ENCODE measurements at regions of chr1 and their contacts with region 1.

Region 1: GRCh38 chr1:244074559-244075171 is 23.6 kb downstream of the ZBTB18 start:
- DNase-seq: peak; percentile 64 to 88 (median 76)
- ATAC-seq: peak; percentile 94 to 98 (median 98)
- H3K4me3 ChIP-seq: peak overlapping the region; percentile 35 to 40
- H3K4me3 Mint-ChIP-seq: peak overlapping the region; percentile 72 to 83 (median 77)
- H3K27ac ChIP-seq: peak overlapping the region; percentile 71
- H3K27ac Mint-ChIP-seq: peak overlapping the region; percentile 95 to 99
- H3K4me1 ChIP-seq: peaks cover 22 to 43% of the 10 kb centered on the region in 2 experiments
- H3K4me1 Mint-ChIP-seq: peaks cover 45 to 55% (median 47%) of the 10 kb centered on the region in 3 donors
- H3K27me3 ChIP-seq: peaks cover 0 to 8% of the 10 kb centered on the region in 2 experiments
- H3K27me3 Mint-ChIP-seq: no peaks in the 10 kb centered on the region

Region 2: DNA sequence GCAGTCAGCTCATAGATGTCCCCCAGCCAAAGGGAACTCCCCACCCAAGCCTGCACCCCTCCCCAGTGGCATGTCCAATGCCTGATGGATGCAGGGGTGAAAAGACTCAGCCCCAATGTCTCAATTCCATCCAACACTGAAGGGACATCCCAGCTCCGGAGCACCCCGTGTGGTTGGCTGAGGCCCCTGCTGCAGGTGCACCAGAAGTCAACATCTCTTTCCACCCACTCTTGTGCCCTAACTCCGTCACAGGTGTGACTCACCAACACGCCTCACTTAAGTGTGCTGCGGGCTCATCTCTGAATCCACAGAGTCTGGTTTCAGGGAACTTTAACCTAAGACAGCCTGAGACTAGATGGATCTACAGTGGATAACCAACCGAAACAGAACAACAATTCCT is 64.5 kb before region 1 on chr1:
- CTCF ChIA-PET with region 1: no interaction called
- POLR2A ChIA-PET with region 1: no interaction called
- DNase-seq: peak in 12 of 35 experiments; percentile 1 to 23 (median 2)
- ATAC-seq: peak in 3 of 4 experiments; percentile 27 to 59 (median 35)
- H3K4me3 ChIP-seq: no peak overlapping the region
- H3K4me3 Mint-ChIP-seq: no peak overlapping the region
- H3K27ac ChIP-seq: no peak overlapping the region
- H3K27ac Mint-ChIP-seq: no peak overlapping the region
- H3K4me1 ChIP-seq: no peaks in the 10 kb centered on the region
- H3K4me1 Mint-ChIP-seq: no peaks in the 10 kb centered on the region
- H3K27me3 ChIP-seq: peaks cover 0 to 9% of the 10 kb centered on the region in 2 experiments
- H3K27me3 Mint-ChIP-seq: no peaks in the 10 kb centered on the region

Region 3: DNA sequence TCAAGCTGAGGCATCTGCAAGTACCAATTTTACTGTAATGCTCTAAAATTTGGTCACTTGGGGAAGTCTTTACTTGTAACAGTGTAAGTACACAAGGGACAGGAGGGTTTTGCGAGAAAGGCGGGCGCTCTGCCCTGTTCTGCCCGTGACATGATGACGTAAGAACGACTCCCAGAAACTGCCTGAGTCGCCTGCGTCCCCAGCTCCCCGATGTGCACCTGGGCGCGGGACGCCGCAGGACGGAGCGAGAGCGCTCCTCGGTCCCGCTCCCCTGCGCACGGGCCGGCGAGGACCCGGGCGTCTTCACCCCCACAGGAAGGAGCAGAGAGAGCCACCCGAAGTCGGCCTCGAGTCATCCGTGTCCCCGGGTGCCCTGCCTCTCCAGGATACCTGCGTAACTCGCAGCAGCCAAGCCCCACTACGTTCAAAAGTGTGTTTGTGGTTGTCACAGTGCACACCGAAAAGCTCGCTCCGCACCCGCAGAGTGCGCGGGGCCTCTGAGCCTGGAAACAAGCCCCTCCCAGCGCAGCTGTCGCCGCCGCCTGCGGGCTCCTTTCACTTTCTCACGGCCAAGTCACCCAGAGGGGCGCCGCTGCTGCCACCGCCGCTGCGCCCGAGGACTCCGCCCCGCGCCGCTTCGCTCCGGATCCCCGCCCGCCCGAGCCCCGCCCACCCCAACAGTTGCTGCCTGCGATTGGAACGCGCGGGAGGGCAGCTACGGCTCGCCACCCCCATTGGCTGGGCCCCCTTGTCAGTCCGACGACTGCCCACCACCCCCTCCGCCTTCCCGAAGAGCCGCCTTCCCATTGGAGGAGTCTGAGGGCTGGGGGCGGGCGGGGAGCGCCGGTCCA is 26.8 kb before region 1 on chr1:
- CTCF ChIA-PET with region 1: interaction called, 5 to 22 read pairs
- POLR2A ChIA-PET with region 1: interaction called, 5 to 36 read pairs
- DNase-seq: peak; percentile 90 to 99 (median 97)
- ATAC-seq: peak; percentile 78 to 85 (median 83)
- H3K4me3 ChIP-seq: peak overlapping the region; percentile 71 to 95
- H3K4me3 Mint-ChIP-seq: peak overlapping the region; percentile 92 to 95 (median 95)
- H3K27ac ChIP-seq: peak overlapping the region; percentile 96
- H3K27ac Mint-ChIP-seq: peak overlapping the region; percentile 99
- H3K4me1 ChIP-seq: peaks cover 17 to 37% of the 10 kb centered on the region in 2 experiments
- H3K4me1 Mint-ChIP-seq: peaks cover 25 to 29% (median 26%) of the 10 kb centered on the region in 3 donors
- H3K27me3 ChIP-seq: no peaks in the 10 kb centered on the region
- H3K27me3 Mint-ChIP-seq: peaks cover 0 to 2% of the 10 kb centered on the region in 2 donors

Region 4: GRCh38 chr1:244060686-244061085 is 14.0 kb before region 1 on chr1:
- CTCF ChIA-PET with region 1: interaction called, 4 to 10 read pairs
- POLR2A ChIA-PET with region 1: interaction called, 3 to 4 read pairs
- DNase-seq: no peak
- ATAC-seq: no peak
- H3K4me3 ChIP-seq: no peak overlapping the region
- H3K4me3 Mint-ChIP-seq: no peak overlapping the region
- H3K27ac ChIP-seq: no peak overlapping the region
- H3K27ac Mint-ChIP-seq: no peak overlapping the region
- H3K4me1 ChIP-seq: peaks cover 0 to 4% of the 10 kb centered on the region in 2 experiments
- H3K4me1 Mint-ChIP-seq: peaks cover 6 to 19% (median 17%) of the 10 kb centered on the region in 3 donors
- H3K27me3 ChIP-seq: no peaks in the 10 kb centered on the region
- H3K27me3 Mint-ChIP-seq: no peaks in the 10 kb centered on the region

Region 5: GRCh38 chr1:244112636-244113035 is 38.0 kb after region 1 on chr1:
- CTCF ChIA-PET with region 1: no interaction called
- POLR2A ChIA-PET with region 1: no interaction called
- DNase-seq: no peak
- ATAC-seq: no peak
- H3K4me3 ChIP-seq: no peak overlapping the region
- H3K4me3 Mint-ChIP-seq: no peak overlapping the region
- H3K27ac ChIP-seq: no peak overlapping the region
- H3K27ac Mint-ChIP-seq: no peak overlapping the region
- H3K4me1 ChIP-seq: no peaks in the 10 kb centered on the region
- H3K4me1 Mint-ChIP-seq: no peaks in the 10 kb centered on the region
- H3K27me3 ChIP-seq: peaks cover 0 to 5% of the 10 kb centered on the region in 2 experiments
- H3K27me3 Mint-ChIP-seq: peaks cover 3 to 11% of the 10 kb centered on the region in 2 donors

Measured in T-cell (primary cell).